Activated CD4-positive, alpha-beta T cell treated with anti-CD3 and anti-CD28 coated beads, Interleukin-2, amount 10 ng/mL, durations not matched to agents 7 days and 5 days (primary cell): ENCODE measurements at regions of chrX and their contacts with region 1.

Region 1: DNA sequence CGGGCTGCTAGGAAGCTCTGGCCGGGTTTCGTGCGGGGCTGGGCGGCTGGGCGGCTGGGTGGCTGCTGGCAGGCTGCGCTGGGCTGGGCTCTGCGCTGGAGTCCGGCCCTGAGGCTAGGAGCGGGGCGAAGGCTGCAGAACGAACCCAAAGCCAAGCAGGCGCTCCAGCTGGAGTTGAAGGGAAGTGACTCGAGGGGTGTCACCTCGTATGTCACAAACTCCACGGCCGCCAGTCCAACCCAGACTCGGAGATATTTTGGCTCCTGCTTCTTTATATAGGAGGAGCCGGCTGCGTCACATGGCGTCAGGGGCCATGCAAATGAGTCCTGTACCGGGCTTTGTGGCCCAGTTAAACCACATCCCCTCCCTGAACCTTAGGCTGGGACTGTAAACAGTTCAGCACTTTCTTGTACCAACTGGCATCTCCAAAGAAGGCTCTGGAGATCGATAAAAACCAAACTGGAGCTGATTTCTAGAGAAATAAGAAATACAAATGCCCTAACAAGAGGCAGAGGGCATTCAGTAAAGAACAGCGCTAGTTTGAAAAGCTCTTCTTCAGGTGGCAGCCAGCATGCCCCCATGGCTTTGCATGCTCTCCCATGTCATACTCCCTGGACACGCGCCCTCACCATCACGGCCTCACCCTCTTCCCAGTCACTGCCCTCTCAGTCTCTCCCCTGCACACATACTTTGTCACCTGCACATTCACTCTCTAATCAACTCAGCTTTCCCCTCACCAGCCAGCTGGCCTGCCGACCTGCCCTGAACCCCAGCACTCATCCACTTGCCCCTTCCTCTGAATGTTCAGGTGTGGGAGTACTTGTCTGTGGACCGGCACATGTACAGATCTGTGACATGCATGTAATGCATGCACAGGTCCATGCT is 58.5 kb downstream of the TSC22D3 start:
- DNase-seq: peak; percentile 90
- H3K4me3 Mint-ChIP-seq: peak overlapping the region; percentile 87
- H3K27ac Mint-ChIP-seq: peak overlapping the region; percentile 95
- H3K4me1 Mint-ChIP-seq: peaks cover 37% of the 10 kb centered on the region
- H3K27me3 Mint-ChIP-seq: no peaks in the 10 kb centered on the region

Region 2: GRCh38 chrX:107654872-107655761 is 61.9 kb before region 1 on chrX:
- CTCF ChIA-PET with region 1: interaction called, 13 read pairs
- POLR2A ChIA-PET with region 1: no interaction called
- DNase-seq: peak; percentile 70
- H3K4me3 Mint-ChIP-seq: no peak overlapping the region
- H3K27ac Mint-ChIP-seq: peak overlapping the region; percentile 73
- H3K4me1 Mint-ChIP-seq: peaks cover 14% of the 10 kb centered on the region
- H3K27me3 Mint-ChIP-seq: no peaks in the 10 kb centered on the region

Region 3: DNA sequence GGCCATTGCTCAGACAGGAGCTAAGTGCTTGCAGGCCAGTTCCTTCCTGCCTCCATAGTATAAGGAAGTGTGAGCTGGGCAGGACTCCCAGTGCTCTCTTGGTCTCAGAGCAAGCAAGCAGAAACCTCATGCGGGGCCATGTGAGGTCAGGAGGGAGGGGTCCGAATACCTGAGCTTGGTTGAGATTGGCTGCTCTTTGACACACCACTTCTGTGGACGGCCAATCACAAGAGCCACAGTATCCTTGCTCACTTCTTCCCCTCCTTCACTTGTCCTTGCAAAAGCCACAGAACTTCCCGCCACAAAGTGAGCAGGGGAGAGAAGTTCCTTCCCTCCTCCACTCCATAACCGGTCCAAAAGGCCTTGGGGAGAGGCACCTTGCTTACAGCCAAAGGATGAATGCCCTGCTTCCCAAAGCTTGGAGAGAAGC is 32.1 kb before region 1 on chrX:
- CTCF ChIA-PET with region 1: interaction called, 16 read pairs
- POLR2A ChIA-PET with region 1: no interaction called
- DNase-seq: no peak
- H3K4me3 Mint-ChIP-seq: no peak overlapping the region
- H3K27ac Mint-ChIP-seq: peak overlapping the region; percentile 64
- H3K4me1 Mint-ChIP-seq: peaks cover 45% of the 10 kb centered on the region
- H3K27me3 Mint-ChIP-seq: no peaks in the 10 kb centered on the region

Region 4: DNA sequence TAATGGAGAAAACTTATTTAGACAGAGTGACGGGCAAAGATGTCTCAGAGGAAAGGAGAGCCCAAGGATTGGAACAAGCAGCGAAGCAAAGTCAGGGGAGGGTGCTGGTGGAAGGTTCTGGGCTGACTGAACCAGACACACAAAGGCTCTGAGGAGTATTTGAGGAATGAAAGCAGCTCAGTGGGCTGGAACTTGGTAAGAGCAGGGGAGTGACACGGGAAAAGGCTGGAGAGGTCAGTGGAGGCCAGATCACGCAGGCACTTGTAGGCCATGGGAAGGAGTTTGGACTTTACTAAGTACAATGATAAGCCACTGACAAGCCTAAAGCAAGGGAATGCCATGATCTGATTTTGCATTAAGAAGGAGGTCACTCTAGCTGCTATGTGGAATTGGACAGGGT is 12.9 kb before region 1 on chrX:
- CTCF ChIA-PET with region 1: interaction called, 14 read pairs
- POLR2A ChIA-PET with region 1: no interaction called
- DNase-seq: no peak
- H3K4me3 Mint-ChIP-seq: no peak overlapping the region
- H3K27ac Mint-ChIP-seq: no peak overlapping the region
- H3K4me1 Mint-ChIP-seq: peaks cover 15% of the 10 kb centered on the region
- H3K27me3 Mint-ChIP-seq: no peaks in the 10 kb centered on the region

Region 5: DNA sequence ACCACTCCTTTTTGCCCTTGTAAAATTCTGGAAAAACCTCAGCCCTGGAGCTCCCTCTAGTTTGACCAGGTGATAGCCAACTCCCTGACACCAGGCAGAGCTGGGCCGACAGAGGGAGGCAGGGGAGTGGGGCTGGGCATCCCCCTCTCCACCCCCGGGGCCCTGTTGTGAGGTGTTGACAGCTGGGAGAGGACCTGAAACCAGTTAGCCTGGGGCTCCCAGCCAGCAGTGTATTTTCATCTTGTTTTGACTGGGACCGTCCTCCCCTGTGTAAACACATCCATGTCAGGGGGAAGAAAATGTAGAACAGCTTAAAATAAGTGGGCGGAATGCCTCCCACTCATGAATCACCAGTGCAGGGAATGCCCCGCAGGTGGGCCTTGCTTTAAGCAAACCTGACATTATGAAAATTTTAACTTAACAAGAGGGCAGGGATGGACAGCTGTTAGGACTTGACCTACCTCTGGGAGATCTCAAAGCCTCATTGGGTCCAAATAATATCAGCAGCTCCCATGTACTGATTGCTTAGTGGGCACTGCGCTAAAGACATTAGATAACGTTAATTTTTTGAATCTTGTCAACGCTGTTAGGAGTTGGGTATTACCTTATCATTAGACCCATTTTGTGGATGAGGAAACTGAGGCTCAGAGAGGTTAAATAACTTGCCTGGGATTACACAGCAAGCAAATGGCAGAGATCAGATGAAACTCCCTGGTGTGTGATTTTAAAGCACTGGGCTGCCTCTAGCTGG is 12.7 kb after region 1 on chrX:
- CTCF ChIA-PET with region 1: interaction called, 13 read pairs
- POLR2A ChIA-PET with region 1: no interaction called
- DNase-seq: no peak
- H3K4me3 Mint-ChIP-seq: no peak overlapping the region
- H3K27ac Mint-ChIP-seq: no peak overlapping the region
- H3K4me1 Mint-ChIP-seq: peaks cover 2% of the 10 kb centered on the region
- H3K27me3 Mint-ChIP-seq: no peaks in the 10 kb centered on the region

Region 6: GRCh38 chrX:107845625-107846024 is 128.6 kb after region 1 on chrX:
- CTCF ChIA-PET with region 1: no interaction called
- POLR2A ChIA-PET with region 1: no interaction called
- DNase-seq: no peak
- H3K4me3 Mint-ChIP-seq: no peak overlapping the region
- H3K27ac Mint-ChIP-seq: no peak overlapping the region
- H3K4me1 Mint-ChIP-seq: peaks cover 4% of the 10 kb centered on the region
- H3K27me3 Mint-ChIP-seq: no peaks in the 10 kb centered on the region